Heart right ventricle (tissue), 16 donors: ENCODE measurements at regions of chr13 and their contacts with region 1.

Region 1: GRCh38 chr13:35984776-35985453 is 146.3 kb downstream of the DCLK1 start:
- DNase-seq: no peak
- ATAC-seq: peak in 2 of 8 donors; percentile 36 to 45
- H3K4me3 ChIP-seq: no peak overlapping the region
- H3K27ac ChIP-seq: no peak overlapping the region
- H3K4me1 ChIP-seq: peaks cover 0 to 13% (median 0%) of the 10 kb centered on the region in 9 donors
- H3K27me3 ChIP-seq: no peaks in the 10 kb centered on the region
- CTCF ChIP-seq: no peak

Region 2: DNA sequence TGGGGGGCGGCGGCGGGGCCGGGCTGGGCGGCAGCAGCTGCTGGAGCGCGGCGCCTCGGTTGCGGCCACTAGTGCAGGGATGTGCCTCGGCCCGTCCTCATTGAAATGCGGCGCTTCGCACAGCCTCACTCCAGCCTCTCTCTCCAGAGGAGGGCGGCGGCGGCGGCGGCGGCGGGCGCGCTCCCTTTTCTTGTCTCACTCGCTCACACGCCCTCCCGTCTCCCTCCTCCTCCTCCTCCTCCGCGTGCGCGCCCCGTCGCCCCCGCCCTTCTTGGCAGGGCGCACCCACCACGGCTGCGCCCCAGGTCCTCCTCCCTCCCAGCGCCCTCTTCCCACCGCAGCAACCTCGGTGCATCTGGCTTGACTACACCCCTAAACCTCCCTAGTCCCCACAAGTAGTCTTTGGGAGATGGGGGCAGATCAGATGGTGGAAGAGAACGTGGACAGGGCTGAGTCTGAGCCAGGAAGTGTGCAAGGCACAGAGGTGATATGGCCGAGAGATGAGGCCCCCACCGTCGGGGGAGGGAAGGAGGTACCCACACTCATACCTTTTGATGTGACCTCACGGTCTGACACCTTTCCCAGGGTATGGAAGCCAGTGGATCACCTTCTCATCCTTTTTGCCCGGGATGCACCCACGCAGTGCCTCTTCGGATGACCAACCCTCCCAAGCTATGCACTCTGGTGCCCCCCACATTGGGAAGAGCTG is 146.5 kb after region 1 on chr13 and contains the start of gene DCLK1:
- intact Hi-C with region 1: loop called in 3 of 10 experiments (anchors 10 kb)
- DNase-seq: peak; percentile 54 to 79
- ATAC-seq: peak; percentile 75 to 93 (median 81)
- H3K4me3 ChIP-seq: peak within 1 kb of the TSS; percentile 18 to 80 (median 60)
- H3K27ac ChIP-seq: peak within 1 kb of the TSS in 9 of 10 donors; percentile 19 to 77 (median 56)
- H3K4me1 ChIP-seq: peaks cover 0 to 30% (median 7%) of the 10 kb centered on the region in 9 donors
- H3K27me3 ChIP-seq: peaks cover 0 to 24% (median 0%) of the 10 kb centered on the region in 7 donors
- CTCF ChIP-seq: peak in 1 of 9 donors; percentile 8
- total RNA-seq, gene DCLK1: 5.8 to 16.9 (median 10.4) TPM

Region 3: DNA sequence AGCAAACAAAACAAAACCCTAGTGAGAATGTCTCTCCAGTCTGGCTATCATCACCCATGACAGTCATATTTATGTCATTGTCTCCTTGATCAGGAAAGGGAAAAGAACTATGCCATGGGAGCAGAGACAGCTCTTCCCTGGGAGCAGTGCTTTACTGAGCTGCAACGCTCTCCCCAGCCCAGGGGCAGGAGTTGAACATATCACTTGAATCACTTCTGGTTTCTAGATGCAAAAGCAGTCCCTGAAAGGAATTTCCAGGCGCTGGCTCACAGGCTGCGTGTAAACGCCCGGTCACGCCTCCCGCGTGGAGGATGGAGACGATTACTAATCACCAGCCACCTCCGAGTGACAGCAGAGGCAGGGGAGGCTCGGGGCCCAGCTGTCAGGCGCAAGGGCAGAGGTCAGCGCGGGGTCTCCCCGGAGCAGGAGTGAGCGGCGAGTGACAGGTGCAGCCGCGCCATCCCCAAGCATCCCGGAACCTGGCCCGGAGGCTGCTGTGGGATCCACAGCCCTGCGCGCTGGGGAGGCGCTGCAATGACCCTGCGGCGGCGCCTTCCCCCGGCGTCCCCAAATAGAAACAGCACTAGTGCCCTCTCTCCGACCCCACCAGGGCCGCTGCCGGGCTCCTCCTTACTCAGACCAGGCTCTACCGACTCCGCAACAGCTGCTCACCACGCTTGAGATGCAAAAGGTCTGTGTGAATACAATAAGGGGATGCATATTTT is 169.8 kb after region 1 on chr13:
- intact Hi-C with region 1: loop called in 2 of 10 experiments (anchors 10 kb)
- DNase-seq: peak; percentile 7 to 27
- ATAC-seq: peak; percentile 63 to 95 (median 80)
- H3K4me3 ChIP-seq: peak overlapping the region in 9 of 10 donors; percentile 18 to 54 (median 41)
- H3K27ac ChIP-seq: peak overlapping the region in 2 of 10 donors; percentile 18 to 37
- H3K4me1 ChIP-seq: peaks cover 0 to 10% (median 7%) of the 10 kb centered on the region in 9 donors
- H3K27me3 ChIP-seq: peaks cover 0 to 11% (median 0%) of the 10 kb centered on the region in 7 donors
- CTCF ChIP-seq: peak in 1 of 9 donors; percentile 12

Region 4: DNA sequence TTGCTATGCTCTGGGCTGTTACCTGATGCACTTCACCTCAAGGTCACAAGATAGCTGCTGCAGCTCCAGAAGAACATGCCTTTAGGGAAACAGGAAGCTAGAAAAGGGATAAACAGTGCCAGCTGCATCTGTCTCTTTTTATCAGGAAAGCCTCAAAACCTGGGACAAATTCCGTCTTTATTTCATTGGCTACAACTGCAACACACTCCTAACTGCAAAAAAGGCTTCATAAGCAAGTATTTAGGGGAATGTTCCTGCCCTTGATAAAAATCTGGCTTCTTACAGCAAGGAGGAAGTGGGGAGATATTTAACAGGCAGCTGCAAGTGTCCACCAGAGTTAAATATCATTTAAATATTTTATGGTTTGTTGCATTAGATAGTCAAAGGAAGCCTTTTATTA is 654.7 kb after region 1 on chr13:
- intact Hi-C with region 1: no loop called
- DNase-seq: no peak
- ATAC-seq: no peak
- H3K4me3 ChIP-seq: no peak overlapping the region
- H3K27ac ChIP-seq: no peak overlapping the region
- H3K4me1 ChIP-seq: no peaks in the 10 kb centered on the region
- H3K27me3 ChIP-seq: no peaks in the 10 kb centered on the region
- CTCF ChIP-seq: no peak